GM12878 (cell line): ENCODE measurements at regions of chr3 and their contacts with region 1.

Region 1: GRCh38 chr3:155805802-155806618 is at the start of gene C3orf33:
- DNase-seq: no peak
- ATAC-seq: peak; percentile 99
- H3K4me3 ChIP-seq: peak within 1 kb of the TSS; percentile 68
- H3K27ac ChIP-seq: 0 out of 2 replicates have a peak within 1 kb of the TSS, but pooled peaks have one; percentile 56
- H3K4me1 ChIP-seq: peaks cover 3% of the 10 kb centered on the region; the same call in 1 of the 2 replicates
- H3K27me3 ChIP-seq: no peaks in the 10 kb centered on the region; a peak in 1 of 4 replicates
- CTCF ChIP-seq: peak; percentile 84 to 96 (median 86)
- EP300 ChIP-seq: no peak
- POLR2A ChIP-seq: peak; percentile 90
- RAD21 ChIP-seq: peak; percentile 73
- polyA plus RNA-seq, gene C3orf33: 0.35 to 1.7 TPM

Region 2: GRCh38 chr3:155753036-155753639 is 52.9 kb before region 1 on chr3:
- CTCF ChIA-PET with region 1: interaction called, 19 read pairs
- POLR2A ChIA-PET with region 1: no interaction called
- RAD21 ChIA-PET with region 1: interaction called, 4 read pairs
- SMC1A ChIA-PET with region 1: interaction called, 4 read pairs
- in situ Hi-C with region 1: no loop called
- intact Hi-C with region 1: no loop called
- DNase-seq: no peak
- ATAC-seq: peak; percentile 81
- H3K4me3 ChIP-seq: no peak overlapping the region
- H3K27ac ChIP-seq: no peak overlapping the region
- H3K4me1 ChIP-seq: no peaks in the 10 kb centered on the region
- H3K27me3 ChIP-seq: no peaks in the 10 kb centered on the region
- CTCF ChIP-seq: peak; percentile 36 to 51 (median 42); a peak in 3 of 6 replicates
- EP300 ChIP-seq: no peak
- POLR2A ChIP-seq: no peak
- RAD21 ChIP-seq: peak; percentile 59; the same call in 1 of the 2 replicates

Region 3: GRCh38 chr3:155835341-155836071 is 29.5 kb after region 1 on chr3:
- CTCF ChIA-PET with region 1: interaction called, 10 read pairs
- POLR2A ChIA-PET with region 1: no interaction called
- RAD21 ChIA-PET with region 1: interaction called, 7 read pairs
- SMC1A ChIA-PET with region 1: no interaction called
- in situ Hi-C with region 1: no loop called
- intact Hi-C with region 1: no loop called
- DNase-seq: no peak
- ATAC-seq: peak; percentile 29; the same call in 2 of the 3 replicates
- H3K4me3 ChIP-seq: no peak overlapping the region
- H3K27ac ChIP-seq: no peak overlapping the region
- H3K4me1 ChIP-seq: no peaks in the 10 kb centered on the region
- H3K27me3 ChIP-seq: no peaks in the 10 kb centered on the region
- CTCF ChIP-seq: no peak
- EP300 ChIP-seq: no peak
- POLR2A ChIP-seq: no peak
- RAD21 ChIP-seq: no peak

Region 4: DNA sequence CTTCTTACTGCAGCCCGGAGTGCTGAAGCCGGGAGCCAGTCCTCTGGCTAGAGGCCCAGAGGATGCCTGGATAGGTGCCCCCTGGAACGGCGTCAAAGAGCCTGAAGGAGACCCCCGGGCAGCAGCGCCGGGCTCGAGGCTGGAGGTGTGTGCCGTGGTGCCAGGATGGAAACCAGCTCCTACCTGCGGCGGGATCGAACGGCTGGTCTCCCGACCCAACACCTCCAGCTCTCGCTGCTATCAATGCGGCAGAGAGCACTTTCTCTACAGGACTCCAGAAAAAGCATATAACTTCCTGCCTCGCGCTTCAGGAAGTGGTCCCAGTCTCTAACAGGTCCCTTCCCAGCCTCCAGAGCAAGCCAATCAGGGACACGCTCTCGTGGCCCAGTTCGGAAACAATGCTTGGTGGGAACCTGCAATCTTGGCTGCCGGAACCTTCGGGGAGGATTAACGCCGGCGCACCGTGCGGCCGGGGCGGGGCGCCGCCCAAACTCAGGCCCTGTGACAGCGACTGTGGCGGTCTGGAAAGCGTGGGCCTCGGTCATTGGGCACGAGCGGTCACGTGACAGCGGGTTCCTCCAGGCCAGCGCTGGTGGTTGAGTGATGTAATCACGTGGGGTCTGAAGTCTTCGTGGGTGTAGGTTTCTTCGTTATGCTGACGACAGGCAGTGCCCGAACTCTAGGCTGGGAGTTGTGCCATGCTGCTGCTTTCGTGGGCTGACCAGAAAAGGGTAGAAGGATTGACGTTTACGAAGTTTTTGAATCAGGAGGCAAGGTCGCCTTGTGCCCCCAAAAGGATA is 48.3 kb after region 1 on chr3 and contains the start of gene SLC33A1:
- CTCF ChIA-PET with region 1: interaction called, 70 read pairs
- POLR2A ChIA-PET with region 1: interaction called, 3 read pairs
- RAD21 ChIA-PET with region 1: interaction called, 21 read pairs
- SMC1A ChIA-PET with region 1: interaction called, 23 read pairs
- in situ Hi-C with region 1: no loop called
- intact Hi-C with region 1: loop called (anchors 2 kb)
- DNase-seq: peak; percentile 97
- ATAC-seq: peak; percentile 95
- H3K4me3 ChIP-seq: peak within 1 kb of the TSS; percentile 84
- H3K27ac ChIP-seq: peak within 1 kb of the TSS; percentile 93
- H3K4me1 ChIP-seq: no peaks in the 10 kb centered on the region
- H3K27me3 ChIP-seq: no peaks in the 10 kb centered on the region
- CTCF ChIP-seq: no peak
- EP300 ChIP-seq: 0 out of 4 replicates have a peak, but pooled peaks have one; percentile 55 to 56
- POLR2A ChIP-seq: peak; percentile 93
- RAD21 ChIP-seq: no peak
- polyA plus RNA-seq, gene SLC33A1: 6.4 to 6.5 TPM

Region 5: DNA sequence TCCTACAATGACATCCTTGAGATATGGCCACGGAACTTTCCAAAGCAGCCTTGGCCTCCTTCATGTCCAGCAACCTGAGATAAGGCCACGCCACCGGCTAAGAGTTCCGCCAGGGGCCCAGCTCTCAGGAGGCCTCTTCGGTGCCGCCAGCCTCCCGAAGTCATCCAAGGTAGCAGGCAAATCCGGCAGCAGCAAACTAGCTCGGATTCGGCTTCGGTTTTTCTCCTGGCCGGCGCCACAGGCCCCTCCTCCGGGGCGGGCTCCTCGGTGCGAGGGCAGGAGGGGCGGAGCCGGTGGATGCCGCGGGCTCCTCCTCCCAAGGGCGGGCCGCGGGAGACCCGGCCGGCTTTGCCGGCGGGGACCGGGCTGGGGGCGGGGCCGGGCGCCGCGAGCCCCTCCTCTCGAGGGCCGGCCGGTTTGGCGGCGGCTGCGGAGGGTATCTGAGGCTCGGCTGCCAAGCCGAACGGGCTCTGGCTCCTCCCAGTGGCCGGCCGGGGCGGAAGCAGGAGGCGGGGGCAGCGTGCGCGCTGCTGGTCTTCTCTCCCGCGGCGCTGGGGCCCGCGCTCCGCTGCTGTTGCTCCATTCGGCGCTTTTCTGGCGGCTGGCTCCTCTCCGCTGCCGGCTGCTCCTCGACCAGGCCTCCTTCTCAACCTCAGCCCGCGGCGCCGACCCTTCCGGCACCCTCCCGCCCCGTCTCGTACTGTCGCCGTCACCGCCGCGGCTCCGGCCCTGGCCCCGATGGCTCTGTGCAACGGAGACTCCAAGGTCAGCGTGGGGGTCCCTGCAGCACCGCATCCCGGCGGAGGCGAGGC is 64.3 kb after region 1 on chr3 and contains the start of gene GMPS:
- CTCF ChIA-PET with region 1: interaction called, 61 read pairs
- POLR2A ChIA-PET with region 1: interaction called, 9 read pairs
- RAD21 ChIA-PET with region 1: interaction called, 48 read pairs
- SMC1A ChIA-PET with region 1: interaction called, 22 read pairs
- in situ Hi-C with region 1: no loop called
- intact Hi-C with region 1: loop called (anchors 5 kb)
- DNase-seq: peak; percentile 61
- ATAC-seq: peak; percentile 92
- H3K4me3 ChIP-seq: peak within 1 kb of the TSS; percentile 85
- H3K27ac ChIP-seq: peak within 1 kb of the TSS; percentile 89
- H3K4me1 ChIP-seq: peaks cover 2% of the 10 kb centered on the region
- H3K27me3 ChIP-seq: no peaks in the 10 kb centered on the region
- CTCF ChIP-seq: peak; percentile 26 to 82 (median 43); a peak in 4 of 6 replicates
- EP300 ChIP-seq: 0 out of 4 replicates have a peak, but pooled peaks of 1 of the 2 experiments have one; percentile 9
- POLR2A ChIP-seq: peak; percentile 91
- RAD21 ChIP-seq: peak; percentile 45
- polyA plus RNA-seq, gene GMPS: 43.3 to 56.2 TPM

Region 6: GRCh38 chr3:155890671-155891190 is 84.7 kb after region 1 on chr3:
- CTCF ChIA-PET with region 1: interaction called, 7 read pairs
- POLR2A ChIA-PET with region 1: no interaction called
- RAD21 ChIA-PET with region 1: interaction called, 3 read pairs
- SMC1A ChIA-PET with region 1: interaction called, 3 read pairs
- in situ Hi-C with region 1: no loop called
- intact Hi-C with region 1: loop called (anchors 5 kb)
- DNase-seq: no peak
- ATAC-seq: peak; percentile 74
- H3K4me3 ChIP-seq: no peak overlapping the region
- H3K27ac ChIP-seq: no peak overlapping the region
- H3K4me1 ChIP-seq: no peaks in the 10 kb centered on the region
- H3K27me3 ChIP-seq: no peaks in the 10 kb centered on the region
- CTCF ChIP-seq: no peak
- EP300 ChIP-seq: no peak
- POLR2A ChIP-seq: no peak
- RAD21 ChIP-seq: no peak

Region 7: DNA sequence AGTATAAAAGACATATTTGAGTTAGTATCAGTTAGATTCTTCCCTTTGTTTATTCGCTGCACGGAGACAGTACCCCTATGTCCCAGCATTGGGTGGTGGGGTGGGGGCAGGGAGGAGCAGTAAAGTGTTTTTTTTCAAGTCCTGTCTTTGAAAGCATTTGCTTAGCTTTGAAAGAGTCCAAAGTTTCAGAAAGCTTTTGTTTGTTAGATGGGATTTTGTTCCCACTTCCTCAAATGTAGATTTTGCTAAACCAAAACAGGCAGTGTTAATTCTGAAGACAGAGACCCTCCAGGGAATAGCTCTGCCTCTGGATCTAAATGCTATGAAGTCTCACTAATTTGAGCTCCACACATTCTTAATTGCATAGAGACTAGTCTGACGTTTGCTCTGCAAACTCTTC is 199.7 kb after region 1 on chr3:
- CTCF ChIA-PET with region 1: interaction called, 6 read pairs
- POLR2A ChIA-PET with region 1: no interaction called
- RAD21 ChIA-PET with region 1: interaction called, 7 read pairs
- SMC1A ChIA-PET with region 1: interaction called, 3 read pairs
- in situ Hi-C with region 1: no loop called
- intact Hi-C with region 1: loop called (anchors 10 kb)
- DNase-seq: no peak
- ATAC-seq: no peak
- H3K4me3 ChIP-seq: no peak overlapping the region
- H3K27ac ChIP-seq: no peak overlapping the region
- H3K4me1 ChIP-seq: no peaks in the 10 kb centered on the region
- H3K27me3 ChIP-seq: no peaks in the 10 kb centered on the region; a peak in 1 of 4 replicates
- CTCF ChIP-seq: no peak
- EP300 ChIP-seq: no peak
- POLR2A ChIP-seq: no peak
- RAD21 ChIP-seq: no peak

Region 8: GRCh38 chr3:156416846-156417558 is 611.0 kb after region 1 on chr3:
- CTCF ChIA-PET with region 1: no interaction called
- POLR2A ChIA-PET with region 1: no interaction called
- RAD21 ChIA-PET with region 1: no interaction called
- SMC1A ChIA-PET with region 1: no interaction called
- in situ Hi-C with region 1: no loop called
- intact Hi-C with region 1: no loop called
- DNase-seq: no peak
- ATAC-seq: peak; percentile 74
- H3K4me3 ChIP-seq: no peak overlapping the region
- H3K27ac ChIP-seq: no peak overlapping the region
- H3K4me1 ChIP-seq: no peaks in the 10 kb centered on the region
- H3K27me3 ChIP-seq: no peaks in the 10 kb centered on the region
- CTCF ChIP-seq: no peak
- EP300 ChIP-seq: no peak
- POLR2A ChIP-seq: no peak
- RAD21 ChIP-seq: no peak